BJ (cell line): ENCODE measurements at regions of chr19 and their contacts with region 1.

Region 1: DNA sequence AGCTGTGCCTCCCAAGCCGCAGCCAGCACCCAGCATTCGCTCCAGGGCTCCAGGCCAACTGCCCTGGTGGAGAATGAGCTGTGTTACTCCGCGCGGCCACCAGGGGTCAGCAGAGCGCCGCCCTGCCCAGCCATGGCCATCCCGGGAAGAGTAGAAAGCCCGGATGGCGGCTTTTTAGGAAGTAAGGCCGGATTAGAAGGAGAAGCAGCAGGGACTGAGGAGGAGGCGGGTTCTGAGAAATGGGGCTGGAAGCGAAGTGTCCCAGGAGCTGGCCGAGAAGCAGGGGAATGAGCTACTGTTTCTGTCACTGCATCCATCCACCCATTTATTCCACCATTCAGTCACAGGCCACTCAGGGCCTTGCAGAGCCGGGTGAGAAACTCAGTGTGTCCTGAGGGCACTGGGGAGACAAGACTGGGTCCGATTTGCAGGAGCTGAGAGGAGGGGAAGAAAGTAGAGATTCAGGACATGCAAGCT is 6.6 kb upstream of the NPAS1 start:
- DNase-seq: no peak
- H3K4me3 ChIP-seq: no peak overlapping the region
- H3K27me3 ChIP-seq: no peaks in the 10 kb centered on the region
- CTCF ChIP-seq: peak; percentile 100

Region 2: GRCh38 chr19:46998445-46999125 is 14.5 kb before region 1 on chr19:
- CTCF ChIA-PET with region 1: interaction called, 21 read pairs
- POLR2A ChIA-PET with region 1: no interaction called
- DNase-seq: no peak
- H3K4me3 ChIP-seq: no peak overlapping the region
- H3K27me3 ChIP-seq: no peaks in the 10 kb centered on the region
- CTCF ChIP-seq: no peak

Region 3: GRCh38 chr19:47026156-47026555 is 13.1 kb after region 1 on chr19:
- CTCF ChIA-PET with region 1: interaction called, 20 read pairs
- POLR2A ChIA-PET with region 1: no interaction called
- DNase-seq: no peak
- H3K4me3 ChIP-seq: no peak overlapping the region
- H3K27me3 ChIP-seq: peaks cover 15% of the 10 kb centered on the region
- CTCF ChIP-seq: no peak

Region 4: DNA sequence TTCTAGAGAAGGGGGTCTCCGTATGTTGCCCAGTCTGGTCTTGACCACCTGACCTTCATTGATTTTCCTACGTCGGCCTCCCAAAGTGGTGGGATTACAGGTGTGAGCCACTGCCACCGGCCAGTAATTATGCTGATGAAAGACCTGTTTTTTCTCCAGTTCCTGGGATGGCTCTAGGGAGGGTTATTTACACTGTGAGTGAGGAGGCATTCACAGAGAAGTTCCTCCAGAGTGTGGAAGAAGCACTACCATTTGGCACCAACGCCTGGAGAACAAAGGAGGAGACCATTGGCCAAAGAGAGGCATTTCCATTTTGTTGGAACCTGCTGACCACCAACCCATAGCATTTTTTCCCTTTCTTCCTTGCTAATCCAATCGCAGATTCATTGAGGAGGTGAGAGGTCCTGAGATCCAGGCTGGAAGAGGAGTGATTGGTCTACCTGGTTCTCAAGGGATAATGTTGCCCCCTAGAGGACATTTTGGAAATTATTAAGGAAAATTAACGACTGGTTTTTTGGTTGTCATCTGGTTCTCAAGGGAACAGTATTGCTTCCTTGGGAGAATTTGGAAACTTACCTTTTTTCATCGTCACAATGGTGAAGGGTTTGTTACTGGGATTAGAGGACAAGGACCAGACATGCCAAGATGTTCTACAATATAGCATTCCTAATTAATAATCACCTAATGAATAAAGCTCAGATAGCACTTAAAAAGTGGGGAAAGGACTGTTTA is 112.0 kb after region 1 on chr19:
- CTCF ChIA-PET with region 1: interaction called, 18 read pairs
- POLR2A ChIA-PET with region 1: interaction called, 3 read pairs
- DNase-seq: no peak
- H3K4me3 ChIP-seq: no peak overlapping the region
- H3K27me3 ChIP-seq: no peaks in the 10 kb centered on the region
- CTCF ChIP-seq: peak; percentile 61

Region 5: DNA sequence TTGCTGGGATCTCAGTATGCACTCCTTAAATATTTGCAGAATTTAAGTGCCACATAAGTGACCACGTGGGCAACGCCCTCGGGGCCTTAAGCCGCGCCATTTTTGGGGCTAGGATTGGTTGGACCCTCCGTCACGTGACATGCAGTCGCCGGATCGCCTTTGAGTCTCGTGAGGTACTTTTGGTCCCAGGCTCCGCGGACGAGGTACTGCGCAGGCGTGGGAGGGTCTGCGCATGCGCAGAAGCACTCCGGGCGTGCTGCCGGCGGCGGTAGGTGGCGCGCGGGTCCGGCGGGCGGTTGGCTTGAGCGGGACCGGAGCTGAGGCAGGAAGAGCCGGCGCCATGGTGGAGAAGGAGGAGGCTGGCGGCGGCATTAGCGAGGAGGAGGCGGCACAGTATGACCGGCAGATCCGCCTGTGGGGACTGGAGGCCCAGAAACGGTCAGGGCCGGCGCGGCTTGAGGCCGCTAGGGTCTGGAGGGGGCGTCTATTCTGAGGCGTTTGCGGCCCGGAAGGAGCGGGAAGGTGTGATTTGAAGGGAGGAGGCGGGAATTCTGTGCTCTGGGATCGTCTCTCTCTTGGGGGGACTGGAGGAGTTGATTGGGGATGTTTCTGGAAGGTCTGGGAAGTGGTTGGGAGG is 117.6 kb after region 1 on chr19 and contains the start of gene SAE1:
- CTCF ChIA-PET with region 1: interaction called, 12 read pairs
- POLR2A ChIA-PET with region 1: no interaction called
- DNase-seq: peak; percentile 94
- H3K4me3 ChIP-seq: peak within 1 kb of the TSS; percentile 77
- H3K27me3 ChIP-seq: no peaks in the 10 kb centered on the region
- CTCF ChIP-seq: peak; percentile 68
- polyA plus RNA-seq, gene SAE1: 138 and 156 TPM in 2 replicates